ENCODE measurements at regions of chr12 and their contacts with region 1.

Region 1: DNA sequence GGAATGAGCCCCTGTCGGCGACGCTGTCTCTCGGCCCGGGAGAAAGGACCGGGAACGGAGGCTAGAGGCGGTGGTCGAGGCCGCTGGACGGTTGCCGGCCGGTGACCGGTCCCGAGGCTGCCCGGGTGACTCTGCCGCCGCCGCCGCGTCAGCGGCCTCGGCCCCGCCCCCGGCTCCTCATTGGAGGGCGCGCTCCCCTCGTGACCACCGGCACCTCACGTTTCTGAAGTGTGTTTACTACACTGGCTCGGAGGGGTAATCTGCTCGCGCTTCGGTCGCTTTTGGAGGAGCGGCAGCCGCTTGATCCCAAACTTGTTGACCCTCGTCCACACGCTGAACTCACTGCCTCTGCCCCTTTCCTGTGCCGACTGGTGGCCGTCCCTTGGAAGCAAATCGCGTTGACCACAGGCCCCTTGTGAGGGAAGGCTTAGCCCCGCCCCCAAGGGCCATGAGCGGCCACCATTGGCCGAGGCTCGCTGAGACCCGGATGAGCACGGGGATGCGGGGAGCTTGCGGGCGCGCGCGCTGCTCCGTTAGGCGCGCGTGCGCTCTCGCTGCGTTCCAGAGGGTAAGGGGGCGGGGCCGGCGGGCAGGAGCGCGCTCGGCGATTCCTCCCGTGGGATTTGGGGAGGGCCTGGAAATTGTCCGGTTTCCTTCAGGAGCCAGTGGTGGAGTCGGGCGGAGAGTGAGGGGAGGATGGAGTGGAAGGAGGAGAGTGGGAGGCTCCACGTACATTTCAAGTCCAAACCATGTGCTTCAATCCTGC is at the start of gene CRY1:
- DNase-seq: peak; percentile 94 to 96
- H3K4me3 ChIP-seq: peak within 1 kb of the TSS; percentile 85 to 96
- H3K27ac ChIP-seq: peak within 1 kb of the TSS; percentile 96 to 99
- H3K4me1 ChIP-seq: peaks cover 0 to 9% of the 10 kb centered on the region in 2 donors
- H3K27me3 ChIP-seq: no peaks in the 10 kb centered on the region
- CTCF ChIP-seq: peak in 1 of 4 experiments; percentile 20
- POLR2A ChIP-seq: peak; percentile 95 to 98
- total RNA-seq, gene CRY1: 8.2 to 66.5 (median 35.6) TPM

Region 2: GRCh38 chr12:106955377-106956047 is 138.1 kb before region 1 on chr12 and contains the start of gene TMEM263:
- intact Hi-C with region 1: loop called (anchors 10 kb)
- DNase-seq: peak; percentile 95 to 98
- H3K4me3 ChIP-seq: peak within 1 kb of the TSS; percentile 75 to 95
- H3K27ac ChIP-seq: peak within 1 kb of the TSS; percentile 95 to 100
- H3K4me1 ChIP-seq: no peaks in the 10 kb centered on the region
- H3K27me3 ChIP-seq: no peaks in the 10 kb centered on the region
- CTCF ChIP-seq: peak in 1 of 4 experiments; percentile 36
- POLR2A ChIP-seq: peak; percentile 88 to 98
- total RNA-seq, gene TMEM263: 35.9 to 157 (median 46.0) TPM

Region 3: GRCh38 chr12:106986625-106987430 is 106.8 kb before region 1 on chr12 and contains the start of gene MTERF2:
- intact Hi-C with region 1: loop called (anchors 10 kb)
- DNase-seq: peak; percentile 91 to 92
- H3K4me3 ChIP-seq: peak within 1 kb of the TSS; percentile 62 to 83
- H3K27ac ChIP-seq: peak within 1 kb of the TSS; percentile 90 to 91
- H3K4me1 ChIP-seq: no peaks in the 10 kb centered on the region
- H3K27me3 ChIP-seq: no peaks in the 10 kb centered on the region
- CTCF ChIP-seq: no peak
- POLR2A ChIP-seq: peak; percentile 68 to 82
- total RNA-seq, gene MTERF2: 3.8 to 31.5 (median 18.6) TPM

Region 4: DNA sequence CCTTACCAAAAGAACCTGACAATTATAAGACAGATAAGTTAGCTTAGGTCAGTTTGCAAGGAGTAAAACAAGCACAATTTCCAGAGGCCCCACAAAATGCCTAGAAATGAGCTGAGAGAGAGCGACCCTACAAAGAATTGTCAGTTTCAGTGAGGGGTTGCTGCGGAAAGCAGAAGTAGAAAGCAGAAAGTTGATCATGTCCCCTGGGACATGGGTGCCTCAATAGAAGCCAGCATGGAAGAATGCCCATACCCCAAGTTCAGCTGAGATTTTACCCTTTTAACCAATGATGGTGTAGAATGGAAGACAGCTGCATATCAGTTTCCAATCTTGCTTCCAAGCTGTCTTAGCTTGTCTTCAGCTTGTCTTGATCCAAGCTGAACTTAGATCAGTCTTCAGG is 21.5 kb after region 1 on chr12:
- intact Hi-C with region 1: no loop called
- DNase-seq: no peak
- H3K4me3 ChIP-seq: no peak overlapping the region
- H3K27ac ChIP-seq: no peak overlapping the region
- H3K4me1 ChIP-seq: no peaks in the 10 kb centered on the region
- H3K27me3 ChIP-seq: no peaks in the 10 kb centered on the region
- CTCF ChIP-seq: no peak
- POLR2A ChIP-seq: no peak

Region 5: GRCh38 chr12:107145397-107145796 is 51.8 kb after region 1 on chr12:
- intact Hi-C with region 1: no loop called
- DNase-seq: no peak
- H3K4me3 ChIP-seq: no peak overlapping the region
- H3K27ac ChIP-seq: no peak overlapping the region
- H3K4me1 ChIP-seq: no peaks in the 10 kb centered on the region
- H3K27me3 ChIP-seq: no peaks in the 10 kb centered on the region
- CTCF ChIP-seq: no peak
- POLR2A ChIP-seq: no peak

Region 6: DNA sequence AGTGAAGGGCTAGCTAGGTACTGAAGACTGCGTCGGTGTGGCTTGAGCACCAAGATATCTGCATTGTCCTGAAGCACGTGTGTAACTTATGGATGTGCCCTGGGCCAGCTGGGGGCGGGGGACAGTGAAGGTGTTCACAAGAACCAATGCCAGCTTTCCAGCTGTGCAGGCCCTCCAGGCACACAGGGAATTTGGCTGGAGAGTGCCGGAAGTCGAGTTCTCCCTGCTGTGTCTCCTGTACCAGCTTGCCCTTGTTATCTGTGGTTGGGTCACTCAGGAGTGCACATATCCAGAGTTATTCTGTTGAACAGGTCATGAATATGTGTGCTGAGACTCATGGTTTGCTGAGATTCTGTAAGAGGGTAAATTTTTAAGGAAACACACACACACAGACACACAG is 75.6 kb after region 1 on chr12:
- intact Hi-C with region 1: no loop called
- DNase-seq: no peak
- H3K4me3 ChIP-seq: no peak overlapping the region
- H3K27ac ChIP-seq: no peak overlapping the region
- H3K4me1 ChIP-seq: no peaks in the 10 kb centered on the region
- H3K27me3 ChIP-seq: no peaks in the 10 kb centered on the region
- CTCF ChIP-seq: no peak
- POLR2A ChIP-seq: no peak

Region 7: GRCh38 chr12:107242189-107242588 is 148.6 kb after region 1 on chr12:
- intact Hi-C with region 1: no loop called
- DNase-seq: no peak
- H3K4me3 ChIP-seq: no peak overlapping the region
- H3K27ac ChIP-seq: no peak overlapping the region
- H3K4me1 ChIP-seq: no peaks in the 10 kb centered on the region
- H3K27me3 ChIP-seq: no peaks in the 10 kb centered on the region
- CTCF ChIP-seq: no peak
- POLR2A ChIP-seq: no peak